CD14-positive monocyte (primary cell): ENCODE measurements at regions of chr15 and their contacts with region 1.

Region 1: GRCh38 chr15:63234451-63234870 is 42.9 kb upstream of the APH1B start:
- DNase-seq: no peak
- H3K4me3 ChIP-seq: peak overlapping the region in 1 of 3 experiments; percentile 36
- H3K4me3 Mint-ChIP-seq: peak overlapping the region in 1 of 2 donors; percentile 51
- H3K27ac ChIP-seq: peak overlapping the region; percentile 66 to 87
- H3K27ac Mint-ChIP-seq: peak overlapping the region; percentile 79 to 94 (median 92)
- H3K4me1 ChIP-seq: peaks cover 73 to 90% of the 10 kb centered on the region in 2 donors
- H3K4me1 Mint-ChIP-seq: peaks cover 75% of the 10 kb centered on the region
- H3K27me3 ChIP-seq: no peaks in the 10 kb centered on the region
- H3K27me3 Mint-ChIP-seq: no peaks in the 10 kb centered on the region
- CTCF ChIP-seq: no peak

Region 2: DNA sequence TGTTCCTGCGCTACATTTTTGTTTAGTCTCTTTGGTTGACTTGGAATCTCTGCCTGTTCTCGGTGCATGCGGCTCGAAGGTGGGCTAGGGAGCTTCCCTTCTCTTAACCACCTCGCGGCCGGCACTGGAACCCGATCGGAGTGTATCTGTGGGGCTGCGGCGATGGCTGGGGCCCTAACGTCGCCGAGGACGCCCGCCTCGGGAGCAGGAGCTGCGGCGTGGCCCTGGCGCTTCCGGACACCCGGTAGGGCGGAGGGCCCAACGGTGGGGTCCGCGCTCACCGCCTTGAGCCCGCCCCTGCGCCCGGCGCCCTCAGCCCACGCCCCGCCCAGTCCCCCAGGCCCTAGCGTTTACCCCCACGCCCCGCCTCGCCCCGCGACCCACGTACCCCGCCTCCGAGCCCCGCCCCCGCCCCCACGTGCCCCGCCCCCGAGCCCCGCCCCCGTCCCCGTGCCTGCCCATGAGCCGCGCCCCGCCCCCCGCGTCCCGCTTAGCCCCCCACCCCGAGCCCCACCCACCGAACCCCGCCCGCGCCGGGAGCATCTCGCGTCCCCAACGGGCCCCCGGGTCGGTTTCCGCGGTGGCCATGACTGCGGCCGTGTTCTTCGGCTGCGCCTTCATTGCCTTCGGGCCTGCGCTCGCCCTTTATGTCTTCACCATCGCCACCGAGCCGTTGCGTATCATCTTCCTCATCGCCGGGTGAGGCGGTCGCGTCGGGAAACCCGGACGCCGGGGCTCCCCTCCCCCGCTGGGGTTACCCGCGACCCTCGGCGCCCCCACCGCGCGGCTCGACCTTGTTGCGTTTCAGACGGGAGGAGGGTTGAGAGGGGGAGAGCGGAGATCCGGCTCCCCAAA is 42.8 kb after region 1 on chr15 and contains the start of gene APH1B:
- intact Hi-C with region 1: loop called in 1 of 2 experiments (anchors 5 kb)
- DNase-seq: peak; percentile 54 to 67 (median 61)
- H3K4me3 ChIP-seq: peak within 1 kb of the TSS; percentile 75 to 98 (median 96)
- H3K4me3 Mint-ChIP-seq: peak within 1 kb of the TSS; percentile 88 to 93
- H3K27ac ChIP-seq: peak within 1 kb of the TSS; percentile 74 to 94
- H3K27ac Mint-ChIP-seq: peak within 1 kb of the TSS; percentile 81 to 91 (median 89)
- H3K4me1 ChIP-seq: peaks cover 28 to 36% of the 10 kb centered on the region in 2 donors
- H3K4me1 Mint-ChIP-seq: peaks cover 34% of the 10 kb centered on the region
- H3K27me3 ChIP-seq: no peaks in the 10 kb centered on the region
- H3K27me3 Mint-ChIP-seq: peaks cover 0 to 4% (median 0%) of the 10 kb centered on the region in 3 donors
- CTCF ChIP-seq: no peak
- polyA plus RNA-seq, gene APH1B: 13.6 to 57.1 (median 54.8) TPM